ENCODE measurements at regions of chr4 and their contacts with region 1.

Region 1: GRCh38 chr4:2241410-2242353 is at the starts of genes HAUS3 and POLN:
- DNase-seq: peak; percentile 88 to 99
- H3K4me3 ChIP-seq: peak within 1 kb of the TSS; percentile 85
- H3K27ac ChIP-seq: 0 out of 2 replicates have a peak within 1 kb of the TSS, but pooled peaks have one; percentile 7
- H3K4me1 ChIP-seq: peaks cover 24% of the 10 kb centered on the region
- H3K27me3 ChIP-seq: no peaks in the 10 kb centered on the region
- CTCF ChIP-seq: no peak; the same call in 1 of the 2 replicates
- total RNA-seq, gene HAUS3: 15.8 and 16.2 TPM in 2 replicates
- total RNA-seq, gene POLN: 0.18 and 1.3 TPM in 2 replicates

Region 2: GRCh38 chr4:2105559-2105958 is 136.1 kb before region 1 on chr4:
- CTCF ChIA-PET with region 1: no interaction called
- POLR2A ChIA-PET with region 1: no interaction called
- intact Hi-C with region 1: no loop called
- DNase-seq: no peak
- H3K4me3 ChIP-seq: no peak overlapping the region
- H3K27ac ChIP-seq: no peak overlapping the region
- H3K4me1 ChIP-seq: no peaks in the 10 kb centered on the region
- H3K27me3 ChIP-seq: peaks cover 14% of the 10 kb centered on the region
- CTCF ChIP-seq: no peak

Region 3: GRCh38 chr4:2262143-2262943 is 20.7 kb after region 1 on chr4:
- CTCF ChIA-PET with region 1: no interaction called
- POLR2A ChIA-PET with region 1: interaction called, 22 read pairs
- intact Hi-C with region 1: loop called (anchors 1 kb)
- DNase-seq: peak; percentile 95 to 99
- H3K4me3 ChIP-seq: peak overlapping the region; percentile 62
- H3K27ac ChIP-seq: no peak overlapping the region
- H3K4me1 ChIP-seq: peaks cover 9% of the 10 kb centered on the region; the same call in 1 of the 2 replicates
- H3K27me3 ChIP-seq: 0 out of 2 replicates have a peak, but pooled peaks cover 6% of the 10 kb centered on the region
- CTCF ChIP-seq: no peak

Region 4: DNA sequence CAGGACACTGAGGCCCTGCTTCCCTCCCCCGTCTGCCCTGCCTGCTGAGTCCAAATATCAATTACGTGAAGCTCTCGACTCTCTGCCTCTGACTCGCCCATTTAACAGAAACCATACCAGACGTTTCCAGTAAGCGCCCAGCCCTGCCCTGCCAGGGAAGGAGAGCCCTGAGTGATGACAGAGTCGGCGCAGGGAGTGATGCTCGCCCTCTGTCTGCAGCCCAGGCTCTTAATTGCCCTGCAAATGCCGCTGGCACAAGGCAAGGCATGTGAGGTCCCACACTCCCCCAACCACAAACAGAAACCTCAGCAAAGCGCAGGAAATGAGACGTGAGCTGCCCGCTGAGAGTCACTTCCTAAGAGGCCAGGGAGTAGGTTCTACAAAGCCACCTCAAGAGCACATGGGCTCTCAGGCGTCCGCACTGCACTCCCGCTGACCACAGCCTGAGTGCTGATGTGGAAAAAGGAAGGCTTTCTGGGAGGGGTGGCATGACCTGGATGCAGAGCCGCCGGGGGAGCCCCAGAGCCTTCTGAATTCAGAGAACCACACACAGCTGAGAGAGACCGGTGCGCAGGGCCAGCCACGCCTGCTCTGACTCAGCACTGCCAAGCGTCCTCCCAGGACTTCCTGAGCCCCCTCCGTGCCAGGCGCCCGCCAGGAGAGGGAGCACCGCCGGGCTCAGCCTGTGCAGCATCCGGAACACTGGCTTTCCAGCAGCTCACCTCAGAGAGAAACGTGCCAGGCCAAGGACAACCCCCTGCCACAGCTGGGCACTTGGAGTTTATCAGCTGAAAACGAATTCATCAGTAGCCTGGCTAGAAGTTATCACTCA is 171.4 kb after region 1 on chr4:
- CTCF ChIA-PET with region 1: no interaction called
- POLR2A ChIA-PET with region 1: no interaction called
- intact Hi-C with region 1: loop called (anchors 5 kb)
- DNase-seq: peak; percentile 83 to 88
- H3K4me3 ChIP-seq: peak overlapping the region; percentile 50
- H3K27ac ChIP-seq: peak overlapping the region; percentile 76
- H3K4me1 ChIP-seq: peaks cover 29% of the 10 kb centered on the region
- H3K27me3 ChIP-seq: peaks cover 7% of the 10 kb centered on the region
- CTCF ChIP-seq: peak; percentile 44

Region 5: DNA sequence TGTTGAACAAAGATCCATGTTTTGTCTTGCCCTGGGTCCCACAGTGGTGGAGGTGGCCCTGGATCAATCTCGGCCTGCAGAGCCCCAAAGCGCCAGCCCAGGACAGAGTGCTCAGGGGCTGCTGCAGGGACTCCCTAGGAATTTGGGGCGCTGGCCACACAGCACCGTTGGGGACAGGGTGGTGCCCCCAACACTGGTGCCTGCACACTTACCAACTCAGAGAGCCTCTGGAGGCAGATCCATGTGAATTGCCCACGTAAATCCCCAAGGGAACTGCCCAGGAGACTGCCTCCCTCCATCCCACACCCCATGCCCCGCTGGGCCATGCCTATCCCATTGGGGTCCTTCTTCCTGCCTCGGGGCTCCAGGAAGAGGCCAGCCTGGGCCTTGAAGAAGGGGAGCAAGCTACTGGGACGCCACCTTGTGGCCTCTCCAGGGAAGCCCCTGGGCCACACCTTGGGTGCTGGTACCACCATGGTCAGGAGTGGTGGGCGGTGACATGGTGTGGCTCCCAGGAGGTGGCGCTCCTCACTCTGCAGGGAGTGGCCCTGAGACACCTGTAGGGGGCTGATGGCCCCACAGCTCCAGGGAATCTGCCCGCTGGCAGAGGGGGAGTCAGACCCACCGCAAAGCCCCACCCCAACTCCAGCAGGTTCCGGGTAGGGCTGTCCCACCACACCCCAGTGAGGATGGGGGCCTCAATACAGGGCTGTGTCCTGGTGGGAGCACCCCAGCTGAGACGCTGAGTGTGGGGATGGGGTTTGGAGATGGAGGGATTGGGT is 199.9 kb after region 1 on chr4:
- CTCF ChIA-PET with region 1: no interaction called
- POLR2A ChIA-PET with region 1: interaction called, 3 read pairs
- intact Hi-C with region 1: loop called (anchors 5 kb)
- DNase-seq: peak; percentile 38 to 70
- H3K4me3 ChIP-seq: no peak overlapping the region
- H3K27ac ChIP-seq: no peak overlapping the region
- H3K4me1 ChIP-seq: no peaks in the 10 kb centered on the region
- H3K27me3 ChIP-seq: peaks cover 30% of the 10 kb centered on the region
- CTCF ChIP-seq: peak; percentile 73

Region 6: GRCh38 chr4:2536193-2537010 is 294.7 kb after region 1 on chr4 and contains the start of gene FAM193A:
- CTCF ChIA-PET with region 1: no interaction called
- POLR2A ChIA-PET with region 1: no interaction called
- intact Hi-C with region 1: loop called (anchors 5 kb)
- DNase-seq: peak; percentile 96 to 99
- H3K4me3 ChIP-seq: peak within 1 kb of the TSS; percentile 81
- H3K27ac ChIP-seq: peak within 1 kb of the TSS; percentile 44; the same call in 1 of the 2 replicates
- H3K4me1 ChIP-seq: peaks cover 13% of the 10 kb centered on the region; the same call in 1 of the 2 replicates
- H3K27me3 ChIP-seq: no peaks in the 10 kb centered on the region
- CTCF ChIP-seq: no peak
- total RNA-seq, gene FAM193A: 20.1 and 23.4 TPM in 2 replicates

Region 7: GRCh38 chr4:2572076-2572475 is 330.4 kb after region 1 on chr4:
- CTCF ChIA-PET with region 1: interaction called, 13 read pairs
- POLR2A ChIA-PET with region 1: no interaction called
- intact Hi-C with region 1: no loop called
- DNase-seq: no peak
- H3K4me3 ChIP-seq: no peak overlapping the region
- H3K27ac ChIP-seq: no peak overlapping the region
- H3K4me1 ChIP-seq: no peaks in the 10 kb centered on the region
- H3K27me3 ChIP-seq: no peaks in the 10 kb centered on the region
- CTCF ChIP-seq: no peak

Region 8: DNA sequence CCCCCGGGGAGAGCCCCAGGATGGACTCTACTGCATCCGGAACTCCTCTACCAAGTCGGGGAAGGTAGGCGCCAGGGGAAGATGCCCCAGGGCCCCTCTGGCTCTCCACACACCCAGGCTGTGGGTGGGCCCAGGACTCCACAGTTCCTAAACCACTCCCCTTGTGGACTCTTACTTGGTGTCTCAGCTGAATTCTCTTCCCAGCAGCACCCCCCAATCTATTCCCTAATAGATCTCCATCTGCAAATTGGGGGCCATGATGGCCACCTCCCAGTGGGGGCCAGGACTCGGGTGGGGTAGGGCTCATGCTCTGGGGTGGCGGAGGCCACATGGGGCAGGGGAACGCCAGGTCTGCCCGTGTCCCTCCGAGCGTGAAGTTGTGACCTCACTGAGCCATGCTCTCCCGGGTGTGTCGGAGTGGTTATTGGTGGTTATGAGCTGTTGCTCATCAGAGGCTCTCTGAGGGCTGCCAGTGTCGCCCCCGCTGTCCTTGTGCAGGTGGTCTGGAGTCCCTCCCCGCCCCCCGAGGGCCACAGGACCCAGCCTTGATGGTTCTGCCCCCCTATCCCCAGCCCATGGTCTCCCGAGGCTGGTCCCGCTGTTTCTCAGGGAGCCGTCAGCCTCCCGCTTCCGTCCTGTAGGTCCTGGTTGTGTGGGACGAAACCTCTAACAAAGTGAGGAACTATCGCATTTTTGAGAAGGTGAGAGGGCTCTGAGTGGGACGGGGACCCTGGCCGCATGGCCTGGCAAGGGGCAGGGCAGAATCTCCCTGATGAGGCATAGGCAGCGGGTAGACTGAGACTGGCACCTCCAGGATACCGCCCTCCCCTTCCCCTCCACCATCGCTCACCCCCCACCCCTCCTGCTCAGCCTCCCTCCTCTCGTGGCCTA is 590.9 kb after region 1 on chr4:
- CTCF ChIA-PET with region 1: no interaction called
- POLR2A ChIA-PET with region 1: no interaction called
- intact Hi-C with region 1: no loop called
- DNase-seq: no peak
- H3K4me3 ChIP-seq: no peak overlapping the region
- H3K27ac ChIP-seq: no peak overlapping the region
- H3K4me1 ChIP-seq: no peaks in the 10 kb centered on the region
- H3K27me3 ChIP-seq: no peaks in the 10 kb centered on the region
- CTCF ChIP-seq: no peak